ENCODE measurements at regions of chr7 and their contacts with region 1.

Region 1: DNA sequence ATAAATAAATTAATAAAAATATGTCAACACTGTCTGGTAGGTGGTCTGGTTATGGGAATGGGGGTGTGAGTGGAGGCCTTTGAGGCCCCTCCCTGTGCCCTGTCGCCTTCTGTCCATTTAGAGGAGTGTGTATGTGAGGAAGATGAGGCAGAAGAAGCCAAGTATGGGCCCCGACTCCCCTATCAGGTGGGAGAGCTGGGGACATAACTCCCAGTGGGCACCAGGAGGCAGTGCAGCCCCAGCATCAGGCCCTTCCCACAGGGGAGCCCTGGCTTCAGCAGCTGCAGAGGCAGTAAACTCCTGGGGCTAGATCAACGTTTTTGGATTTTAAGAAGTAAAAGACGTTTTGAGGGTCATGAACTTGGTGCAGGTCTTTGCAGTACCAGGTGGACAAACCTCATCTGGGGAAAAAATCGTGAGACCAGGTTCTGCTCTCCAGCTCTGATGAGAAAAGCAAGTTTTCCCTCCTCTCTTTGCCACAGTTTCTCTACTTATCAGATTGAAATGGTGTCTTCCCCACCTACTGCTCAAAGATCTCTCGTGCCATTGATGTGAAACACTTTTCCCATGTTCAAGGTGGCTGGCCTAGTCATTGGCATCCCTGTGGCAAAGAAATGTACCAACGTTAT is 167.8 kb upstream of the EEPD1 start:
- DNase-seq: peak; percentile 65 to 77 (median 75)
- H3K4me3 ChIP-seq: no peak overlapping the region
- H3K4me3 Mint-ChIP-seq: no peak overlapping the region
- H3K27ac ChIP-seq: no peak overlapping the region
- H3K27ac Mint-ChIP-seq: peak overlapping the region in 1 of 7 donors; percentile 40
- H3K4me1 ChIP-seq: no peaks in the 10 kb centered on the region
- H3K4me1 Mint-ChIP-seq: no peaks in the 10 kb centered on the region
- H3K27me3 ChIP-seq: no peaks in the 10 kb centered on the region
- H3K27me3 Mint-ChIP-seq: peaks cover 0 to 5% (median 0%) of the 10 kb centered on the region in 3 donors
- CTCF ChIP-seq: peak; percentile 94

Region 2: DNA sequence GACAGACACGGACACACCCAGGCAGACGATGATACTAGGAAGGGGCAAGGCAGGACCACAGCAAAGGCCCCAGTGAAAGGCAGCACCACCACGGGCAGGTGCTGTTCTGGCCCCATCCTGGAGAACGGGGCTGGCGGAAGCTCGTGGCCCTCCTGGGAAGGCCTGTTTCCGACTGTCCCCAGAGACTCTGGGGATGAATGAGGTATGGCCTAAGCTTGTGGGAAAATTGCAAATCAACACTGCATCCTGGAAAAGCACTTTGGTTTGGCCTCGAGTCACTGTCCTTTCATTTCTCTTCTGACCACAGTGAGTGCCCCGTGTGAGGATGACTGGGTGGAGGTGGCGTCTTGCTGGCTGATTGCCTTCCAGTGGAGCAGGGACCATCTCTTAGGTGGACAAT is 322.8 kb after region 1 on chr7:
- intact Hi-C with region 1: loop called in 1 of 2 experiments (anchors 5 kb)
- DNase-seq: no peak
- H3K4me3 ChIP-seq: no peak overlapping the region
- H3K4me3 Mint-ChIP-seq: no peak overlapping the region
- H3K27ac ChIP-seq: no peak overlapping the region
- H3K27ac Mint-ChIP-seq: no peak overlapping the region
- H3K4me1 ChIP-seq: no peaks in the 10 kb centered on the region
- H3K4me1 Mint-ChIP-seq: no peaks in the 10 kb centered on the region
- H3K27me3 ChIP-seq: no peaks in the 10 kb centered on the region
- H3K27me3 Mint-ChIP-seq: peaks cover 1 to 9% (median 7%) of the 10 kb centered on the region in 3 donors
- CTCF ChIP-seq: no peak

Region 3: GRCh38 chr7:36315309-36316133 is 330.3 kb after region 1 on chr7:
- intact Hi-C with region 1: loop called (anchors 1 to 5 kb)
- DNase-seq: peak in 1 of 3 donors; percentile 8
- H3K4me3 ChIP-seq: no peak overlapping the region
- H3K4me3 Mint-ChIP-seq: no peak overlapping the region
- H3K27ac ChIP-seq: no peak overlapping the region
- H3K27ac Mint-ChIP-seq: peak overlapping the region in 1 of 7 donors; percentile 57
- H3K4me1 ChIP-seq: no peaks in the 10 kb centered on the region
- H3K4me1 Mint-ChIP-seq: peaks cover 3% of the 10 kb centered on the region
- H3K27me3 ChIP-seq: no peaks in the 10 kb centered on the region
- H3K27me3 Mint-ChIP-seq: peaks cover 2 to 7% (median 3%) of the 10 kb centered on the region in 3 donors
- CTCF ChIP-seq: no peak

Region 4: GRCh38 chr7:37284805-37285231 is 1299.6 kb after region 1 on chr7:
- intact Hi-C with region 1: no loop called
- DNase-seq: peak in 2 of 3 donors; percentile 25 to 37
- H3K4me3 ChIP-seq: no peak overlapping the region
- H3K4me3 Mint-ChIP-seq: no peak overlapping the region
- H3K27ac ChIP-seq: no peak overlapping the region
- H3K27ac Mint-ChIP-seq: peak overlapping the region in 3 of 7 donors; percentile 11 to 30 (median 12)
- H3K4me1 ChIP-seq: peaks cover 29 to 33% of the 10 kb centered on the region in 2 donors
- H3K4me1 Mint-ChIP-seq: peaks cover 49% of the 10 kb centered on the region
- H3K27me3 ChIP-seq: no peaks in the 10 kb centered on the region
- H3K27me3 Mint-ChIP-seq: no peaks in the 10 kb centered on the region
- CTCF ChIP-seq: peak; percentile 77

Measured in CD14-positive monocyte (primary cell).